Keratinocyte (primary cell): ENCODE measurements at regions of chr3 and their contacts with region 1.

Region 1: GRCh38 chr3:124467980-124468902 is 262.0 kb upstream of the UMPS start:
- DNase-seq: no peak
- H3K4me3 ChIP-seq: no peak overlapping the region
- H3K27ac ChIP-seq: no peak overlapping the region
- H3K4me1 ChIP-seq: no peaks in the 10 kb centered on the region
- H3K27me3 ChIP-seq: peaks cover 4% of the 10 kb centered on the region
- CTCF ChIP-seq: peak; percentile 97 to 99 (median 98)

Region 2: DNA sequence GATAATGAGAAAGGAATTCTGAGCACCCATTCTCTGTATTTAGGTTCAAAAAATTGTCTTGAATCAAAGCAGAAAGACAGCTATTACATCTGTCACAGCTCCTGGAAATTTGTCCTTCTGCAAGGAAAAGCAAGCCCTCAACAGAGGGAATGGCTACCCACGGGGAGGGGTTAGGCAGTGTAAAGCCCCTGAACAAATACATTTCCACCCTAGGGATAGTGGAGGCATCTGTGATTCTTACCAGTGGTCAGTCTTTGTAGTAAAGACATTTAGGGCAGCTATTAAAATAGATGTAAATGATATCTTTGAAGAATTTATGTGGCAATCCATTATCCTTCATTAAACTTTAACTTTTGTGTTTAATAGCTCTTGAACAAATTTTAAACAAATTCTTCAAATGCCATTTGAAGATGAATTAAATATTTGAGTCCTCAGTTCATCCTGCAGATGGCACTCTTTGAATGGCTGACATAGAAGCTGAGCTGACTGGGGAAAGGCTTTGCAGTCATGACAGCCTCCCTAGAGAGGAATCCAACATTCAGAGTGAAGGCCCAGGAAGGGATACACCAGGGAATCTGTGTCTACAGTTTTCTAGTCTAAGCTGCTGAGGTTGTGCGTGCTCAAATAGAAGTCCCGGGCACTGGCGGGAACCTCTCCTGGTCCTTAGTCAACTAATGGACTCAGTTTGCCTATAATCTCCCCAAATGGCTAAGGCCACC is 116.7 kb before region 1 on chr3:
- dilution Hi-C with region 1: loop called (anchors 25 kb)
- DNase-seq: peak; percentile 7
- H3K4me3 ChIP-seq: no peak overlapping the region
- H3K27ac ChIP-seq: no peak overlapping the region
- H3K4me1 ChIP-seq: no peaks in the 10 kb centered on the region
- H3K27me3 ChIP-seq: peaks cover 16% of the 10 kb centered on the region
- CTCF ChIP-seq: peak; percentile 50 to 64 (median 56)